ENCODE measurements at regions of chr1 and their contacts with region 1.

Region 1: DNA sequence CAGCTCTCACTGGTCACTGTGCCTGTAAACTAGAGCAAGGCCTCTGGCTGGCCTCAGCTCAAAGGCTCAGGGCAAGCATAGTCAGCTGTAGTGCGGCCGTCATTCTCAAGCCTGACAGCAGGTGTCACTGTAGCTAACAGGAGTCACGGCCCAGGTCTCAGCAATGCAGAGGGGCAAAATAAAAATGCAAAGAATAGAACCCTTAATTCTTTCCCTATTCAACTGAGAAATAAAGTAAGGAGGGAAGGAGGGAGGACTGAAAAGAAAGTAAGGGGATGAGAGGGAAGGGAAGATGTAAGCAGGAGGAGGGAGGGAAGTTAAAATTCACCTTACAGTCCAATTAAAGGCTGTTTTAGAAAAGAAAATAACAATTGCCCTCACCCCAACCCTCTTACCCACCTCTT is 106.1 kb downstream of the KIAA0319L start:
- DNase-seq: peak; percentile 72
- H3K4me3 ChIP-seq: no peak overlapping the region
- H3K27ac ChIP-seq: no peak overlapping the region
- H3K4me1 ChIP-seq: no peaks in the 10 kb centered on the region
- CTCF ChIP-seq: peak; percentile 91

Region 2: GRCh38 chr1:35143737-35144508 is 307.2 kb before region 1 on chr1:
- CTCF ChIA-PET with region 1: no interaction called
- POLR2A ChIA-PET with region 1: no interaction called
- intact Hi-C with region 1: no loop called
- DNase-seq: no peak
- H3K4me3 ChIP-seq: no peak overlapping the region
- H3K27ac ChIP-seq: no peak overlapping the region
- H3K4me1 ChIP-seq: no peaks in the 10 kb centered on the region
- CTCF ChIP-seq: no peak

Region 3: DNA sequence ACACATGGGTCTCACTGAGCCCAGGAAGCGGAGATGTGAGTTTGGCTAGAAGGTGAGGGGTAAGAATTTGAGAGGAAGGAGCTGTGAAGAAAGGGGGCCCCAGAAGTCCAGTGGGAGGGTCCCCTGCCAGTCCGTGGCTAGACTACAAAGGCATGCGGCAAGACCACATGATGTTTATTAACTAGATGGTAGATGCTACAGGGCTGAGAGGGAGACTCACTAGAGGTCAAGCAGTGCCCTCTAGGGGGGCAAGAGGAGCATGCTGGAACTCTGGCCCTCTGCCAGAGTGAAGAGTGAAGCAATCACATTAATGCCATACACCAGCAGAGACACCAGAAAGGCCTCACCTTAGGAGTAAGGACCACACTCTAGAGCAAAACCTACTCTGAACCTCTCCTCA is 93.9 kb after region 1 on chr1:
- CTCF ChIA-PET with region 1: interaction called, 6 read pairs
- POLR2A ChIA-PET with region 1: interaction called, 3 read pairs
- intact Hi-C with region 1: loop called (anchors 1 kb)
- DNase-seq: peak; percentile 64
- H3K4me3 ChIP-seq: no peak overlapping the region
- H3K27ac ChIP-seq: no peak overlapping the region
- H3K4me1 ChIP-seq: peaks cover 2% of the 10 kb centered on the region
- CTCF ChIP-seq: peak; percentile 75

Region 4: DNA sequence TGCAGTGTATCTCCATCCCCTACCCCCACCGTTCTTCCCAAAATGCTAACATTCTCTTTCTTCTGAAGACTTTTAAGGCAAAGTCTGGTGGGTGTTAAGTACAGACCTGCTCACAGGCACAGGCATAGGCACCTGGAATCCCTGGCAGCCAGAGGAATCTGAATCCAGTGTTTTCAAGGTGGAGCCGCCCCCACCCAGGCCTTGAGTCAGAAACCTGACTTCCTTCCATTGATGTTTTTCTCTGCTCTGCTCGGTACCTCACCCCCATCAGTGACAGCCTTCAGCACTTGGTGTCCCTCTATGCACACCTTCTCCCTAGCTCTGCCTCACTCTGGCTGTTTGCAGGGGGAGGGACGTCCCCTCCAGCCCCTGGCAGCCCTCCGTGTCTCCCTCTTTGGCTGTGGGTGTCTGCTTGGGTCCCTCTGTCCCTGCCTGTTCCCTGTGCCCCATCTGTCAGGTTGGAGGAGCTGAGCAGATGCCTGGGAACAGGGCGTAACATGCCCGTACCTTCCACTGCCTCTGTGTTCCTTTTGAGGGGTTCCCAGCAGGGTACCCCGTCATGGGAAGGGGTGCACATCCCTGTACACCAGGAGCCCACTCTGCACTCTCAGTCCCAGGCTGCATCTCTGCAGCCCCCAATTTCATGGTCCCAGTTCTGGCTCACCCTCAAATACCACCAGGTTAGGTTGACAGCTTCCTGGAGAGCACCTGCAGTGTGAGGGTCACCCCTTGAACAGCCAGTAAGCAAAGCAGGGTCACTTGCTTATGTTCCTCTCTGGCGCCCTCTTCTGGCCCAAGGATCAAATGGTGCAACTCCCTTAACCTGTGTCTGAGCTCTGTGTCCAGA is 113.1 kb after region 1 on chr1:
- CTCF ChIA-PET with region 1: interaction called, 17 read pairs
- POLR2A ChIA-PET with region 1: interaction called, 6 read pairs
- intact Hi-C with region 1: loop called (anchors 1 kb)
- DNase-seq: peak; percentile 85
- H3K4me3 ChIP-seq: no peak overlapping the region
- H3K27ac ChIP-seq: no peak overlapping the region
- H3K4me1 ChIP-seq: no peaks in the 10 kb centered on the region
- CTCF ChIP-seq: peak; percentile 87

Measured in OCI-LY7 (cell line).